GM10248 (cell line): ENCODE measurements at regions of chr9 and their contacts with region 1.

Region 1: GRCh38 chr9:127734747-127735529 is at the start of gene TOR2A:
- DNase-seq: peak; percentile 99
- CTCF ChIP-seq: peak; percentile 99

Region 2: DNA sequence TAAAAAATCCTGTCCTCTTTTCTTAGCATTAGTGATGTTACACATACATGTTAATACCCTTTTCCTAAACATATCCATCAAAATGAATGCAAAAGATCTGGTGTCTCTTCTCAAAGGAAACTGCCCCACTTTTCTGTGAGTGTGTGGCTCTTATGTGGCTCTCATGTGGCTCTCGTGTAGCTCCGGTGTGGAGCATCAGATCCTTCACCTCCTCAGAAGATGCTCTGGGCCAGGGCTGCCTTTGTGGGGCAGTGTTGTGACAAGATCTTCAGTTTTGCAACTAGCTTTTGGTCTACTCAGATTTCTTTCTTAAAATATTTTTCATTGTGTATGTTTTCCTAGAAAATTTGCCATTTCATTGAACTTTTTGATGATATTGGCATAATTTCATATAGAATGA is 451.0 kb before region 1 on chr9:
- CTCF ChIA-PET with region 1: no interaction called
- POLR2A ChIA-PET with region 1: no interaction called
- DNase-seq: no peak
- CTCF ChIP-seq: peak; percentile 49

Region 3: GRCh38 chr9:127608104-127608966 is 126.6 kb before region 1 on chr9:
- CTCF ChIA-PET with region 1: interaction called, 13 read pairs
- POLR2A ChIA-PET with region 1: no interaction called
- DNase-seq: peak; percentile 86
- CTCF ChIP-seq: no peak

Region 4: DNA sequence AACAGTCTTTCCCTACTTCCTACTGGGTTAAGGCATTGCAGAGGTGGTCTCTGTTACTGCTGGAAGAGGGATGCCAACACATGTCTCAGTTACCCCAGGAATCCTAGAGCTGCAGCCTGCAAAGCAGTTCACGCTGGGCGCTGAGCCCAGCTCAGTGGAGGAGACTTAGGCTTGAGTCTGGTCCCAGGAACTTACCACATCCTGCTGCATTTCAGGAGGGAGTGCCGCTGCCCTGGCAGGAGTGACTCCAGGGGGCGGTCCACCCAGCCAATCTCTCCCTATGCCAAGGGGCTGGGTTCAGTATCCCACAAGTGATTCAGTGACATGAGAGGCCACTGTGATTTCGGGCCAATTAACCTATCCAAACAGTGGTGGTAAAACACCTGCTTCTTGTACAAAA is 11.5 kb before region 1 on chr9:
- CTCF ChIA-PET with region 1: interaction called, 53 read pairs
- POLR2A ChIA-PET with region 1: no interaction called
- DNase-seq: no peak
- CTCF ChIP-seq: no peak

Region 5: DNA sequence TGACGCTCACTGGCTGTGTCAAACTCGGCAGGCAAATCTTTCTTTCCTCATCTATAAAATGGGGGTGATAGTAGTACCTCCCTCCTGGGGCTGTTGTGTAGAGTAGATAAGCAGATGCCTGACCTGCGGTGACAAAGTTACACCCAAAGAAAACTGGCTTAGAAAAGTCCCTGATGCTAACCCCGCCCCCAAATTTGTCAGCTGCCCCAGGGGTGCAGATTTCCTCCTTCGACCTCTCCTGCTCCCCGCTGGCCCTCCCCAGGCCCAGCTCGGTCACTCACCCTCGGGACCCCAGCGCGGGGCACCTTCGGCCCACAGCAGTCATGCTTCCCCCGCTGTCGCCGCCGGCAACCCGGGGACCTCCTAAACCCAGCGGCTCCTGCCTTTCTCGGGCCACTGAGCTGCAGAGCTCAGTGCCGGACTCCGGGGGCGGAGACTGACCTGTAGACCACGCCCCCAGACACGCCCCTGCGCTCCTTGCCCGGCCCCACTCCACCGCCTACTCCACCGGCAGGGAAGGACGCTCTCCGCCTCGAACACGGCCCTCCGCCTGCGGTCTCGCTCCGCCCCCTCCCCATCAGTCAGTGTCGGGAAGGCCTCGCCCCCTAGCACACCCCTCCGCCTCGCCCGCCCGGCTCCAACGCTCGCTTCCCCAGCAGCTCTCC is 36.1 kb after region 1 on chr9:
- CTCF ChIA-PET with region 1: interaction called, 16 read pairs
- POLR2A ChIA-PET with region 1: interaction called, 3 read pairs
- DNase-seq: peak; percentile 97
- CTCF ChIP-seq: no peak

Region 6: DNA sequence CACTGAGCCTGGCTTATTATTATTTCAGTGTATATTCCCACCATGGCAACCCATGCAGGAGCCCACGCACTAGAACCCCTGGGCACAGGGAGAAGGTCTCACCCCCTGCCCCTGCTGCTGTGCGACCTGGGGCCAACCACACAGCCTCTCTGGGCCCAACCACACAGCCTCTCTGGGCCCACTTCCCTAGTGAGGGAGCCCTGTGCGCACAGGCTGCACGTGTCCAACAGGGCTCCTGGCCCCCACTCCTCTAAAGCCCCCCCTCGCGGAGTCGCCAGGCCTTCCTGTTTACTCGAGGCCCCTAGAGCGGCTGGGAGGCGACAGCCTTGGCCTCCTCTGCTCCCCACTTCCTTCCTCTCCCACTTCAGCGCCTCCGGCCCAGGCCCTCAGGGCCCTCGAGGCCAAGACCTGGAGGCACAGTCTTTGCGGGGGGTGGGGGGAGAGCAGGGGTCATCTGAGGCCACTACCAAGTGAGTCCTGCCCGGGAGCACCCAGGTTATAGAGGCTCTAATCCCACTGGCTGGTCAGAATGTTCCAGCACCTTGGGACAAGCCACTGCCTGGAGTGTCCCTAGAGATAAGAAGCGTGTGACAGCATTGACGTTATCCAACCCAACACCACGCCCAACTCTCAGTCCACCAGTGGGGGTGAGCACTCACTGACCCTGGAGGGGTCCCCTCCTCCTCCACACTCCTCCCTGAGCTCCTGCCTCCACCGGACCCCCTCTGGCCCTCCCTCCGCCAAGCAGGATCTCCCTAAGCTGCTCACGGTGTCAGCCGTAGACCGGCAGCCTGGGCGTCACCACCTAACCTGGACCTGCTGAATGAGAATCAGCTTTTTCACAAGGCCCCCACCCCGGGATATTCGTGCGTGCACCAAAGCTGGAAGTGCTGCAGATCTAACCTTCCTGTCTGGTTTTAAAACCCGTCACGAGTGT is 127.4 kb after region 1 on chr9:
- CTCF ChIA-PET with region 1: interaction called, 11 read pairs
- POLR2A ChIA-PET with region 1: no interaction called
- DNase-seq: peak; percentile 54
- CTCF ChIP-seq: no peak